ENCODE measurements at regions of chr20 and their contacts with region 1.

Region 1: DNA sequence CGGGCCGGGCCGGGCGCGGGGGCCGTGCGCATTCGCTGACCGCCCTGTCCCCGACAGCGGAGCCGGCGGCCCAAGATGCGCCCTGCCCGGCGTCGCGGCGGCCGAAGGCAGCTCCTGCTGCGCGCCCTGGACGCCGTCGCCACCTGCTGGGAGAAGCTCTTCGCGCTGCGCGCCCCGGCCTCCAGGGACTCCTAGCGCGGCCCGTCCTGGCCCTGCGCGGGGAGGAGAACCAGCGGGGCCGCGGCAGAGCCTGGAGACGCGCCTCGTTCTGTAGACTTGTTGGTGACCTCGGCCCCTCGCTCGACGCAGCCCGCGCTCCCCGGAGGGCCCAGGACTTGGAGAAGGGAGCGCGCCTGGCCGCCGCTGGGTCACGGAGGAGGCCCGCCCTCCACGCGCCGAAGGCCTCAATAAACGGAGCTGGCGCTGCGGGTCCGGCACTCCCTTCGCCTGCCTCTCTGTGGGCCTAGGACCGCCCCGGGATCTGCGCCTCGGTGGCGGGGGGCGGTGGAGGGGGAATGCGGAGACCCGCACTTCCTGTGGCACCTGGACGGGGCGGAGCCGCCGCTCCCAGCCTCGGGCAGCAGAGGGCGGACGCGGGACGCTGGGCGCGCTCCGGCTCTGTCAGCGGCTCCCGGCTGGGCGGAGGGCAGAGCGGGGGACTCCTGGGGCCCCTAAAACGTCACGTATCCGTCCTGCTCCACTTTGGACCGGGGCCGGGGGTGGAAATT is 2.7 kb downstream of the C20orf204 start:
- DNase-seq: peak; percentile 48
- ATAC-seq: peak; percentile 86
- H3K4me3 ChIP-seq: peak overlapping the region; percentile 43 to 65
- H3K27ac ChIP-seq: peak overlapping the region; percentile 92
- H3K4me1 ChIP-seq: peaks cover 3 to 21% of the 10 kb centered on the region in 2 experiments
- H3K27me3 ChIP-seq: no peaks in the 10 kb centered on the region
- CTCF ChIP-seq: peak; percentile 60 to 72 (median 65)
- POLR2A ChIP-seq: no peak
- RAD21 ChIP-seq: peak; percentile 83

Region 2: DNA sequence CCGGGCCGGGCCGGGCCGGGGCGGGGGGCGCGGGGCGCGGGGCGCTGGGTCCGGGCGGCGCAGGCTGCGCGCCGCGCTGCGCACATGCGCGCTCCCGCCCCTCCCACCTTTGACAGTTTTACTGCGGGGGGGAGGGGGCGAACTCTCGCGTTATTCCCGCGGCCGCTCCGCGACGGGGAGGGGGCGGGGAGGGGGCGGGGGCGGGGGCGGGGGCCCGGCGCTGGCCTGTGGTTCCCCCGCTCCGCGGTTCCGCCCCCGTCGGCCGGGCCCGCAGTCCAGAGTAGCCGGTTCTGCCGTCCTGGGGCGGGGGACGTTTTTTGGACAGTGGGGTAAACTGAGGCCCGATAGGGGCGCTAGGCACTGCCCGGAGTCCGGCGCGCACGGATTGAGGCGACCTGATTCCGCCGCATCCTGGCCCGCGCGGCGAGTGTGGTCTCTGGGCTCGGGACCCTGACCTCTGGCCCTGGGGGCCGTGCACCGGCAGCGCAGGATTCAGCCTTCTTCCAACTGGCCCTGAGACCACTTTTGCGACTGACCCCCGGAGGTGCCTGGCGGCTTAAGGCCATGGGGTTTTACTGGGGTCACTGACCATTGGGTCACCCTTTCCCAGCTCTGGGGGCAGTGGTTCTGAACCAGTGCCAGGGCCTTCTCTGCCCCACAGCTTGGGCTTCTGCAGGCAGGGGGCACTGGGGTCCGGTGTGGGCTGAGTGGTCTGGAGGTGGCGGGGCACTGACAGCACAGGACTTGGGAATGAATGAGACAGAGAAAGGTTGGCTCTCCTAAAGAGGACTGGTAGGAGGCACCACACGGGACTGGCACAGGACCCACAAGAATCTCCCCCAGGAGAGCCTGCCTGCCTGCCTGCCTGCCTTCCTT is 68.7 kb before region 1 on chr20 and contains the start of gene ZNF512B:
- CTCF ChIA-PET with region 1: no interaction called
- POLR2A ChIA-PET with region 1: no interaction called
- RAD21 ChIA-PET with region 1: no interaction called
- intact Hi-C with region 1: no loop called
- DNase-seq: no peak
- ATAC-seq: peak; percentile 55
- H3K4me3 ChIP-seq: peak within 1 kb of the TSS; percentile 54 to 62
- H3K27ac ChIP-seq: peak within 1 kb of the TSS; percentile 71; the same call in 1 of the 2 replicates
- H3K4me1 ChIP-seq: peaks cover 21 to 37% of the 10 kb centered on the region in 2 experiments
- H3K27me3 ChIP-seq: no peaks in the 10 kb centered on the region
- CTCF ChIP-seq: no peak
- POLR2A ChIP-seq: no peak
- RAD21 ChIP-seq: no peak
- total RNA-seq, gene ZNF512B: 10.3 TPM

Region 3: DNA sequence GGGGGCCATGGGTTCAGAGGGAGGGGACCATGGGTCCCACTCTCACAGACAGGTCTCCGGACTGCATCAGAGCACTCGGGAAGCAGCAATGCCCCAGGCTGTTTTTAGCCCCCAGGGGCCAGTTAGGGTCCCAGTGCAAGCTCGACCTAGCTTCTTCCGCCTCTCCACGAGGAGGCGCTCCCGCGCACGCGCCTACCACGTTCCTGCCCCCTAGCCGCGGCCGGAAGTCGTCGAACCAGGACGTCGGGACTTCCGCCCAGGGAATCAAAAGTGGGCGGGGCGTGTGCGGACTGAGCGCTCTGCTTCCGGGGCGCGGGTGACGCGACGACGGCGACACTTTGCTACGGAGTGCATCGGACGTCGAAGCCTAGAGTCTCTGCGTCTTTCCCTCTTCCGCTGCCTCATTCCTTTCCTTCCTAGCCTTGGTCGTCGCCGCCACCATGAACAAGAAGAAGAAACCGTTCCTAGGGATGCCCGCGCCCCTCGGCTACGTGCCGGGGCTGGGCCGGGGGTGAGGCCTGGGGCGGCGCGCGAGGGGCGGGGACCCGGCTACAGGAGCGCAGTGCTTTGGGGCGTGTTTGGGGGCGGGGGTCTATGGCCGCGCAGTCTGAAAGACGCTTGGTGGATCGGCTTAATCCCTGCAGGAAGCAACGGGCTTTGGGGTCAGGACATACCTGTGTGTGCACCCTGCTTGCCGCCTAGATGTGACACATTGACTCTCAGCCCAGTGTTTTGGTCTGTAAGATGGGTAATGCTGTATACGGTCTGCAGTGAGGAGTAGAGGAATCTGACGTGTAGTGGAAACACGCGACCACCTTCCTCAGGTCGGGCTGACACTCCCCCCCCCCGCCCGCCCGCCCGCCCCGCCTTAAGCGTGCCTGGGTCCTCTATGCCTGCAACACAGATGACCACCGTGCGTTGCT is 57.7 kb before region 1 on chr20 and contains the start of gene PRPF6:
- CTCF ChIA-PET with region 1: interaction called, 14 read pairs
- POLR2A ChIA-PET with region 1: interaction called, 3 read pairs
- RAD21 ChIA-PET with region 1: no interaction called
- intact Hi-C with region 1: no loop called
- DNase-seq: peak; percentile 91
- ATAC-seq: peak; percentile 78
- H3K4me3 ChIP-seq: peak within 1 kb of the TSS; percentile 94 to 98
- H3K27ac ChIP-seq: peak within 1 kb of the TSS; percentile 69
- H3K4me1 ChIP-seq: peaks cover 22 to 45% of the 10 kb centered on the region in 2 experiments
- H3K27me3 ChIP-seq: no peaks in the 10 kb centered on the region
- CTCF ChIP-seq: peak in 2 of 3 experiments; percentile 82 to 91; a peak in 4 of 6 replicates
- POLR2A ChIP-seq: no peak
- RAD21 ChIP-seq: no peak
- total RNA-seq, gene PRPF6: 74.9 TPM

Region 4: GRCh38 chr20:64057628-64058498 is 19.1 kb after region 1 on chr20:
- CTCF ChIA-PET with region 1: interaction called, 35 read pairs
- POLR2A ChIA-PET with region 1: interaction called, 6 read pairs
- RAD21 ChIA-PET with region 1: interaction called in 1 of 2 experiments, 5 read pairs
- intact Hi-C with region 1: no loop called
- DNase-seq: no peak
- ATAC-seq: peak; percentile 87
- H3K4me3 ChIP-seq: no peak overlapping the region
- H3K27ac ChIP-seq: no peak overlapping the region; the same call in 1 of the 2 replicates
- H3K4me1 ChIP-seq: peaks cover 12 to 42% of the 10 kb centered on the region in 2 experiments; a peak in 3 of 4 replicates
- H3K27me3 ChIP-seq: no peaks in the 10 kb centered on the region
- CTCF ChIP-seq: peak in 2 of 3 experiments; percentile 85 to 93; a peak in 4 of 6 replicates
- POLR2A ChIP-seq: no peak
- RAD21 ChIP-seq: no peak

Region 5: DNA sequence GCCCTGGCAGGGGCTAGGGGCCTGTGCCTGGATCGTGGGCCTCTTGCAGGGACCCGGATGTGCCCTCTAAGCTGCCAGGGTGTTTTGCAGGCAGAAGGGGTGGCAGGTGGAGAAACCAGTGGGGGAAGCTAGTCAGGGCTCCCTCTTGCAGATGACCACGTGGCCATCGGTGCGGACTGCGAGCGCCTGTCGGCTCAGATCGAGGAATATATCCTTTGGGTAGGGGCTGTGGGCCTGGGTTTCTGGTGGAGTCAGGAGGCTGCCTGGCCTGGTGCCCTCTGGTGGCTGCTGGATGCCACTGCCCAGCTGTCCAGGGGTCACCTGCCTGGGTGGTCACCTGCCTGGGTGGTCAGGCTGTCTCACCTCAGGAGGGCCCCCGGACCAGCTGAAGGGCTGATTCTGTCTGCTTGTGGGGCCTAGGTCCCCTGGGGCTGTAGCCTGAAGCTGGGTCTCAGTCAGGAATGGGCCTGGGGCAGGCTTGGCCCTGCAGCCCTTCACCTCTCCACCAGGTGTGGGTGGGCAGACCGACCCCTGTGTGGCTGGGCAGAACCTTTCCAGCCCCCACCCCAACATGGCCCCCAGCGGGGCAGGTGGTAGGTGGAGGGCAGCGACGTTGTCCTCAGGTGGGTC is 31.0 kb after region 1 on chr20:
- CTCF ChIA-PET with region 1: interaction called, 12 read pairs
- POLR2A ChIA-PET with region 1: interaction called, 3 read pairs
- RAD21 ChIA-PET with region 1: interaction called in 1 of 2 experiments, 3 read pairs
- intact Hi-C with region 1: no loop called
- DNase-seq: no peak
- ATAC-seq: peak; percentile 54
- H3K4me3 ChIP-seq: no peak overlapping the region
- H3K27ac ChIP-seq: no peak overlapping the region
- H3K4me1 ChIP-seq: peaks cover 27 to 29% of the 10 kb centered on the region in 2 experiments
- H3K27me3 ChIP-seq: no peaks in the 10 kb centered on the region
- CTCF ChIP-seq: peak in 2 of 3 experiments; percentile 92 to 98; a peak in 5 of 6 replicates
- POLR2A ChIP-seq: no peak
- RAD21 ChIP-seq: no peak

Region 6: GRCh38 chr20:64083378-64083803 is 44.7 kb after region 1 on chr20:
- CTCF ChIA-PET with region 1: no interaction called
- POLR2A ChIA-PET with region 1: no interaction called
- RAD21 ChIA-PET with region 1: no interaction called
- intact Hi-C with region 1: no loop called
- DNase-seq: no peak
- ATAC-seq: peak; percentile 54
- H3K4me3 ChIP-seq: peak overlapping the region; percentile 17 to 20; a peak in 1 of 4 replicates
- H3K27ac ChIP-seq: no peak overlapping the region
- H3K4me1 ChIP-seq: peaks cover 9 to 16% of the 10 kb centered on the region in 2 experiments
- H3K27me3 ChIP-seq: no peaks in the 10 kb centered on the region
- CTCF ChIP-seq: peak in 2 of 3 experiments; percentile 34 to 37; a peak in 3 of 6 replicates
- POLR2A ChIP-seq: no peak
- RAD21 ChIP-seq: no peak; the same call in 1 of the 2 replicates

Region 7: DNA sequence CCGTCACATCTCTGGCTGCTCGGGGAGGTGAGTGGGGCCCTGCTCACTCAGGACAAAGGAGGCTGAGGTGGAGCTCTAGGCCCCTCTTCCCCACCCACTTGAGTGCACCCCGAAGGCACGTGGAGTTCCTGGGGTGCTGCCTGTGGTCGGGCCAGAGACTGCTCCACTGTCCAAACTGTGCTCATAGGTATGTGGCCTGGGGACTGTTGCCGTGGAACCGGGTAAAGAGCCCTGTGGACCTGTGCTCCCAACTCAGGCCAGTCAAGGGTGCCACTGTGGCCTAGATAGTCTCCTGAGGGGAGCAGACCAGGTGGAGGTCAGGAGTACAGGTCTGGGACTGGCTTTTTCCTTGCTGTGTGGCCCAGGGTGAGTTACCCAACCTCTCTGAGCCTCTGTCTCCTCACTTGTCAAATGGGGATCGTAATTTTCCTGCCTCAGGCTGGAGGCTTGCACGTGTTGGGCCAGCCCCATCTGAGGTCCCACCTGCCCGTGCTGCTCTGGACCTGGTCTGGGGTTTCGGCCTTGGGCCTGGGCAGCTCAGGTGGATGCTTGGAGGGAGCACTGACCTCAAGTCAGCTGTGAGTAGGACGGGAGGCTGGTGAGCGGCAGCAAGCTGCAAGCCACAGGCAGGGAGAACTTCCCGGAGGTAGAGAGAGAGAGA is 81.1 kb after region 1 on chr20:
- CTCF ChIA-PET with region 1: interaction called, 16 read pairs
- POLR2A ChIA-PET with region 1: no interaction called
- RAD21 ChIA-PET with region 1: no interaction called
- intact Hi-C with region 1: loop called (anchors 1 kb)
- DNase-seq: peak; percentile 6
- ATAC-seq: peak; percentile 51
- H3K4me3 ChIP-seq: no peak overlapping the region
- H3K27ac ChIP-seq: no peak overlapping the region; the same call in 1 of the 2 replicates
- H3K4me1 ChIP-seq: peaks cover 0 to 8% of the 10 kb centered on the region in 2 experiments; a peak in 2 of 4 replicates
- H3K27me3 ChIP-seq: no peaks in the 10 kb centered on the region
- CTCF ChIP-seq: no peak
- POLR2A ChIP-seq: no peak
- RAD21 ChIP-seq: no peak

Region 8: DNA sequence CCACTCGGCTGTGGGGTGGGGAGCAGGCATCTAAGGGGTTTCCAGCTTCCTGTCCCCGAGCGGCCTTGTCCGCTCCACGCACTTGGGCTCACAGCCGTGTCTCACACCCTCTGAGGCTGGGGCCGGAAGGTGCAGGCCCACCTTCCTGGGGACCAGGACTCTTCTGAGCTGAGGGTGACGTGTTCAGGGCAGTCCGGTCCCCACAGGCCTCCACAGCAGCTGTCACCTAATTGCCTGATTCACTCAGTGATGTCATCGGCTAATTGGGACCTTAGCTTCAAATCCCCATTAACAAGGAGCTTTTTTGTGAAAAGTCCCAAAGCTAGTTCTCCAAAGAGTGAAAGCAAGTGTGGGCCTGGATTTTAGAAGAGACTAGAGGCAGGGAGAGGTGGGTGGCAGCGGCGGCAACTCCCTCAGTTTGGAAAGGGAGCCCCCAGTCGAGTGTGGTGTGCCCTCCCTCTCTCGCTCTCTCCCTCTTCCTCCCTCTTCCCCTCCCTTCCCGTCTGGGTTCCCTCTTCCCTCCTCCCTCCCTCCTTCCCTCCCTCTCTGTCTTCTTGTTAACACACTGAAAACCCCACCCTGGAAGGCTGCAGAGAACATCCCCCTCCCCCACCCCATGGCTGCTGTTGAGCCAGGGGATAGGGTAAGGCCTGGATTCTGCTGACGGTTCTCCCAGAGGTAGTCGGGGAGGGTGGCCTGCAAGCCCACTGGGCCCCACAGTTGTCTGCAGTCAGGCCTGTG is 164.5 kb after region 1 on chr20:
- CTCF ChIA-PET with region 1: no interaction called
- POLR2A ChIA-PET with region 1: no interaction called
- RAD21 ChIA-PET with region 1: no interaction called
- intact Hi-C with region 1: no loop called
- DNase-seq: no peak
- ATAC-seq: no peak
- H3K4me3 ChIP-seq: no peak overlapping the region
- H3K27ac ChIP-seq: no peak overlapping the region
- H3K4me1 ChIP-seq: no peaks in the 10 kb centered on the region
- H3K27me3 ChIP-seq: no peaks in the 10 kb centered on the region
- CTCF ChIP-seq: no peak
- POLR2A ChIP-seq: no peak
- RAD21 ChIP-seq: no peak

Region 9: DNA sequence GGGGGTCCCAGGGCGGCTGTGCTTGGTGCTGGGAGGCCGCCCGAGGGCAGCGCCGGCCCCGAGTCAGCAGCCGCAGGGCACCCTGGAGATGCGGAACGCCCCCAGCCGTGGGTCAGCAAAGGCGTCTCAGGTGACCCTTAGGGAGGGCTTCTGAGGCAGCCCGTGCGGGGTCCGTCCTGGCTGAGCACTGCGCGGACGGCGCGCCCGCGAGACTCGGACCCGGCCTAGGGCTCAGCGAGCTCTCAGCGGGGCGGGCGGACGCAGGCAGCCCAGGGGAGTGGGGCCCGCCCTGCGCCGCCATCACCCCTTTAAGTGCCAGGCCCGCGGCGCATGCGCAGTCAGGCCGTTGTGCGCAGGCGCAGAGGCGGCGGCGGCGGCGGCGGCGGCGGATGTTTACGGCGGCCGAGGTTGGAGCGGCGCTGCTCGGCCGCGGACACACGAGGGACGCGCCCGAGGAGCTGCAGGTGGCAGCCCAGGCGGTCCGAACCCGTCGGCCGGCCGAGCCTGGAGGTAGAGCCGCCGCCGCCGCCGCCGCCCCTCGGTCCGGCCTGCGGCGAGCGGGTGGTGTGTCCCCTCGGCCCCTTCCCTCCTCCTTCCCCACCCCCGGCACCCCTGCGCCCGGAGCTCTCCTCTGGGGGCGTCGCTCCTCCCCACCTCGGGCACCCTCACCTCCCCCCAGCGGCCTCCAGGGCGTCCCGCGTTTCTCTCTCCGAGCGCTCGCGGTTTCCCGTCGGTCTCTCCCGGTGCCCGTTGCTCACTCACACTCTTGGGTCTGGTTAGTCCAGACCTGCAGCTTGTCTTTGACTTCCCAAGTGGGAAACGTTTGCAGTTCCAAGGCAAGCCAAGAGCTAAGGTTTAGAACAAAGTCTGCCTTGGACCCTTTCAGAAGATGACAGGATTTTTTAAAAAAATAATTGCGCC is 216.9 kb after region 1 on chr20 and contains the start of gene PCMTD2:
- CTCF ChIA-PET with region 1: no interaction called
- POLR2A ChIA-PET with region 1: no interaction called
- RAD21 ChIA-PET with region 1: no interaction called
- intact Hi-C with region 1: no loop called
- DNase-seq: peak; percentile 47
- ATAC-seq: peak; percentile 93
- H3K4me3 ChIP-seq: peak within 1 kb of the TSS; percentile 66 to 87
- H3K27ac ChIP-seq: peak within 1 kb of the TSS; percentile 69
- H3K4me1 ChIP-seq: peaks cover 0 to 19% of the 10 kb centered on the region in 2 experiments; a peak in 3 of 4 replicates
- H3K27me3 ChIP-seq: peaks cover 6% of the 10 kb centered on the region; the same call in 1 of the 2 replicates
- CTCF ChIP-seq: no peak
- POLR2A ChIP-seq: peak; percentile 62
- RAD21 ChIP-seq: no peak
- total RNA-seq, gene PCMTD2: 44.7 TPM

Measured in HCT116 (cell line).